PC-9 (cell line): ENCODE measurements at regions of chr20 and their contacts with region 1.

Region 1: DNA sequence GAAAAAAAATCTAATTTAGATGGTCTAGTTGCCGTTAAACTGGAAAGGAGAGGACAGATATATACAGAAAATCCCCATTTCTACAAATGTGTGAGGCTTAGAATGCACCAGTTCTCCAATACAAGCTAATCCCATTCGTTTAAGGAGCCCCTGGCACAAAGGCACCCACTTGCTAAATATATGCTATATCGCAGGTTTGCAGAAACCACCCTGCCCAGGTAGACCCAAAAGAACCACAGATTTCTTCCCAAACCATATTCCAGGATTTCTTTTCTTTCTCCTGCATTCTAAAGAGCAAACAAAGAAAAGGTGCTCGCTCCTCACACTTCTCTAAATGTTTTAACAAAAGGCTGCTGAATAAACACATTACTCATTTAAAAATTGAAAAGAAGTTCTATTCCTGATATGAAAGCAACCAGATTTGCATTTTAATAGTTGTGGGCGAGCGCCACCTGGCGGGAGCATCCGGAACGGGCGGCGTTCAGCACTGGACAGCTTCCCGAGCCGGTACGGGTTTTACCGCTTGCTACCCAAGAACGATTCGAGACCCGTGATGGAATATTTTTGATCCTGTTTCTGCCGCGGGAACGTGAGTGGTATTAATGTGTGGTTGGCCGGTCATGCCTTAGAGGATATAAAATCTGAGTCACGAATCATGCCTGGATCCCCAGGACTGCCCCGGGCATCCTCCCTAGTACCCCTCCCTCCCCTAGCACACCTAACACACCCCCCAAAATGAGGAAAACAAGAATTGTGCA is 2.1 kb downstream of the PTPRT start:
- DNase-seq: peak in 1 of 2 experiments; percentile 75
- H3K4me3 ChIP-seq: no peak overlapping the region
- H3K27ac ChIP-seq: no peak overlapping the region
- H3K4me1 ChIP-seq: no peaks in the 10 kb centered on the region
- H3K27me3 ChIP-seq: peaks cover 50% of the 10 kb centered on the region
- CTCF ChIP-seq: peak; percentile 98

Region 2: DNA sequence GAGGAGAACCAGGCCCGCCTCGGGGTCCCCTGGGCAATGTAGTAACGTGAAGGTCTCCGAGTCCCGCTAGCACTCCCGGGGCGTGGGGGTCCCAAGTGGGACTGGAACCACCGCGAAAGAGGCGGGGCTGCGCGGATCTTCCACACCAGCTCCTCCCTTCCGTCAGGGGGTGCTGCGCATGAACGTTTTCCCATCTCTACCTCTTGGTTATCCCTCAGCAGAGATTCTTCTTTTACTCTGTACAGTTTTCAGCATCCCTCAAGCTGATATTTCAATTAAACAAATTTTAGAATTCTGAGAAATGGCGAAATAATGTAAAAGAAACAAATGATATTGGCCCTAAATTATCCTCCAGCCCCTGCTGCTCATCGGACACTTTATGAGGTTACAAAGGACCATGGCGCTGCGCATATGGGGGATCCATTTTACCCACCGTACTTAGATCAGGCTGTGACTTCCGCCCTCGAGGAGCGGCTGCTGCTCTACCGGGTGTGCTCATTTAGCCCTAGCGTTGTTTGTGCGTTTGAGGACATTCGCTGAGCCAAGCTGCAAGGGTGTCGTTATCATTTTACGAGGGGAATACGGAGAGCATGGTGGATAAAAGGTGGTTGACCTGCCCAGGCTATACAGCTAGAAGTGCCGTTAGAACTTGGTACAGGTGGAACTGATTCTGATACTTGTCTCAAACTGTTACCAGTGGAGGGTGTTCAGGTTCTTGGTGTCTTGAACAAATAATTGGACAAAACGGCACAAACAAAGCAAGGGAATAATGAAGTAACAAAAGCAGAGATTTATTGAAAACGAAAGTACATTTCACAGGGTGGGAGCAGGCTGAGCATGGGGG is 1494.3 kb before region 1 on chr20:
- CTCF ChIA-PET with region 1: no interaction called
- POLR2A ChIA-PET with region 1: no interaction called
- intact Hi-C with region 1: loop called (anchors 5 kb)
- DNase-seq: peak; percentile 76 to 87
- H3K4me3 ChIP-seq: peak overlapping the region; percentile 83
- H3K27ac ChIP-seq: peak overlapping the region; percentile 52
- H3K4me1 ChIP-seq: peaks cover 12% of the 10 kb centered on the region
- H3K27me3 ChIP-seq: peaks cover 15% of the 10 kb centered on the region; the same call in 1 of the 2 replicates
- CTCF ChIP-seq: peak; percentile 66; the same call in 1 of the 2 replicates

Region 3: DNA sequence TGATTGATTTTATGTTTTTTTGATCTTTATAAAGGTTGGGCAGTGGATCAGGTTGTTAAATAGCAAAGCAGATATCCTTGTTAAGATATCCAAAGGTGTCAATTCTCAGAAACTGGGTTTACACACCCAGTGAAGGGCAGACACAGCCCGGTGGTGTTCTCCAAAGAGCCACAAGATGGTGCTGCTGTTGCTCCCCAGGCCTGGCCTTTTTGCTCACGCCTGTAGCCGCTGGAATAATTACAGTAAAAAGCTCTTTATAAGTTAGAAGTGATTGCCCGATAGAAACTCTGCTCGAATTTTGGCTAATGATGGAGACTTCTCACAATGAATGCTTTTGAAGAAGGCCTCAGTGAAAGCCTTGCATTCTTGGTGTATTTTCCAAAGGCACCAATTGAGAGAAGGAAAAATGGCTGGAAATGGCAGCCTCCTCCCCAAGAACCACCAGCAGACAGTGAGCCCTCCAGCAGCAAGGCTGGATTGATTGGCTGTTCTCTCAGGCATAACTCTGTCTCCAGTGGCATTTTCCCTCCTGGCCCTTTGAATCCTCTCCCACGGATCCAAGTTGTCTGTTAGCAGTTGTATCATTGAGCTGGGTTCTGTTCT is 1449.0 kb before region 1 on chr20:
- CTCF ChIA-PET with region 1: no interaction called
- POLR2A ChIA-PET with region 1: no interaction called
- intact Hi-C with region 1: loop called (anchors 1 kb)
- DNase-seq: peak in 1 of 2 experiments; percentile 59
- H3K4me3 ChIP-seq: no peak overlapping the region
- H3K27ac ChIP-seq: no peak overlapping the region
- H3K4me1 ChIP-seq: no peaks in the 10 kb centered on the region
- H3K27me3 ChIP-seq: peaks cover 38% of the 10 kb centered on the region
- CTCF ChIP-seq: peak; percentile 89

Region 4: GRCh38 chr20:41955999-41956705 is 1231.5 kb before region 1 on chr20:
- CTCF ChIA-PET with region 1: no interaction called
- POLR2A ChIA-PET with region 1: no interaction called
- intact Hi-C with region 1: loop called (anchors 1 kb)
- DNase-seq: no peak
- H3K4me3 ChIP-seq: no peak overlapping the region
- H3K27ac ChIP-seq: no peak overlapping the region
- H3K4me1 ChIP-seq: no peaks in the 10 kb centered on the region
- H3K27me3 ChIP-seq: no peaks in the 10 kb centered on the region
- CTCF ChIP-seq: peak; percentile 75

Region 5: DNA sequence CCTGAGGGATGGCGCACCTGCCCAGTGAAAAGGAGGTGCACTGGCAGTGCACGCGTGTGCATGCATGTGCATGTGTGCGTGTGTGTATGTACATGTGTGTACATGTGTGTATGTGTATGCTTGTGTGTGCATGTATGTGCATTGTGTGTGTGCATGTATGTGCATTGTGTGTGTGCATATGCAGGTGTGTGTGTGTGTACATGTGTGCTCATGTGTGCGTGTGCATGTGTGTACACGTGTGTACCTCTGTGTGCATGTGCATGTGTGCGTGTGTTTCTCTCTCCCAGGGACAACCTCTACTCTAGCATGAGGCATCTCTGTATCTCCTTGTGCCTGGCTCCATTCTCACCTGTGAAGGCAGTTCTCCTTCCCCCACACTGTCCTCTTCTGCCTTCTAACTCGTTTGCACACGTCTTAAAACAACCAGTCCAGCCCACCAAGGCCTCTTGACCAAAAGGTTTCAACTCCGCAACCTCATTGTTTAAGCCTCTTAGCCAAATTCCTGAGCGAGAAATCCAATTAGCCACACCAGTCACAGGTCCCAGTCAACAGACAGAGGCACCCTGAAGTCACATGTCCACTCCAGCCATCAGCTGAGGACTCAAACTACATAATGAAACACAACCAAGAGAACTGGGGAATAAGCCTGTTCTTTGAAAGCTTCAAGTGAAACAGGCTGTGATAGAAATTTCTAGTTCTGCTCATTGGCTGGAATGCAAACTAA is 105.6 kb after region 1 on chr20:
- CTCF ChIA-PET with region 1: no interaction called
- POLR2A ChIA-PET with region 1: no interaction called
- intact Hi-C with region 1: no loop called
- DNase-seq: no peak
- H3K4me3 ChIP-seq: no peak overlapping the region
- H3K27ac ChIP-seq: no peak overlapping the region
- H3K4me1 ChIP-seq: no peaks in the 10 kb centered on the region
- H3K27me3 ChIP-seq: peaks cover 67% of the 10 kb centered on the region
- CTCF ChIP-seq: no peak

Region 6: GRCh38 chr20:43408848-43409576 is 221.4 kb after region 1 on chr20:
- CTCF ChIA-PET with region 1: no interaction called
- POLR2A ChIA-PET with region 1: no interaction called
- intact Hi-C with region 1: loop called (anchors 5 kb)
- DNase-seq: peak in 1 of 2 experiments; percentile 21
- H3K4me3 ChIP-seq: no peak overlapping the region
- H3K27ac ChIP-seq: no peak overlapping the region
- H3K4me1 ChIP-seq: no peaks in the 10 kb centered on the region
- H3K27me3 ChIP-seq: peaks cover 39% of the 10 kb centered on the region
- CTCF ChIP-seq: peak; percentile 90

Region 7: GRCh38 chr20:43988867-43989266 is 801.2 kb after region 1 on chr20:
- CTCF ChIA-PET with region 1: no interaction called
- POLR2A ChIA-PET with region 1: no interaction called
- intact Hi-C with region 1: no loop called
- DNase-seq: no peak
- H3K4me3 ChIP-seq: no peak overlapping the region
- H3K27ac ChIP-seq: no peak overlapping the region
- H3K4me1 ChIP-seq: no peaks in the 10 kb centered on the region
- H3K27me3 ChIP-seq: no peaks in the 10 kb centered on the region
- CTCF ChIP-seq: no peak